Activated CD4-positive, alpha-beta memory T cell treated with anti-CD3 and anti-CD28 coated beads for 36 hours (primary cell): ENCODE measurements at regions of chr16 and their contacts with region 1.

Region 1: GRCh38 chr16:4475880-4476788 is at the start of gene HMOX2:
- DNase-seq: peak; percentile 97
- H3K4me3 Mint-ChIP-seq: peak within 1 kb of the TSS; percentile 89
- H3K27ac Mint-ChIP-seq: peak within 1 kb of the TSS; percentile 87
- H3K4me1 Mint-ChIP-seq: peaks cover 38% of the 10 kb centered on the region
- H3K27me3 Mint-ChIP-seq: no peaks in the 10 kb centered on the region
- total RNA-seq, gene HMOX2: 69.1 to 76.0 TPM

Region 2: GRCh38 chr16:4416200-4417032 is 59.7 kb before region 1 on chr16 and contains the start of gene CORO7:
- CTCF ChIA-PET with region 1: no interaction called
- POLR2A ChIA-PET with region 1: interaction called, 15 read pairs
- intact Hi-C with region 1: loop called (anchors 2 kb)
- DNase-seq: peak; percentile 98
- H3K4me3 Mint-ChIP-seq: peak within 1 kb of the TSS; percentile 88
- H3K27ac Mint-ChIP-seq: peak within 1 kb of the TSS; percentile 88
- H3K4me1 Mint-ChIP-seq: peaks cover 33% of the 10 kb centered on the region
- H3K27me3 Mint-ChIP-seq: no peaks in the 10 kb centered on the region
- total RNA-seq, gene CORO7: 90.4 to 101 TPM

Region 3: DNA sequence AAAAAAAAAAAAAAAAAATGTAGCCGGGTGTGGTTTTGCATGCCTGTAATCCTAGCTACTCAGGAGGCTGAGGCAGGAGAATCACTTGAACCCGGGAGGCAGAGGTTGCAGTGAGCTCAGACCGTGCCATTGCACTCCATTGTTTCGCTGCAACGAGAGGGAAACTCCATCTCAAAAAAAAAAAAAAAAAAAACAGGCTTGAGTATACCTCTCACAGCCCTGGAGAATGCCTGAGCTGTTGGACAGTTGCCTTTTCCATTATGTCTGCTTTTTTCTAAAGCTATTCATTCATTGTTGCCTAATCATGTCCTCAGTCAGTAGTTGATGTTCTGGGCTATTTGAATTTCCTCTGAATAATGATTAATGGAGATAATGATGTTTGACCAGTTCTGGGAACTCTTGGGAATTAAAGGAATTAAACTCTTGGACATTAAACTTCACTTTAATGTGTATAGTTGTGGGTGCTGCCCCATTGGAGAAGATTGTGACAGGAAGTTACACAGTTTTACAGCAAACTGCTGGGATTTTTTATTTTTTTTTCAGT is 11.9 kb after region 1 on chr16:
- CTCF ChIA-PET with region 1: interaction called, 10 read pairs
- POLR2A ChIA-PET with region 1: interaction called, 5 read pairs
- intact Hi-C with region 1: no loop called
- DNase-seq: no peak
- H3K4me3 Mint-ChIP-seq: no peak overlapping the region
- H3K27ac Mint-ChIP-seq: peak overlapping the region; percentile 94
- H3K4me1 Mint-ChIP-seq: peaks cover 54% of the 10 kb centered on the region
- H3K27me3 Mint-ChIP-seq: no peaks in the 10 kb centered on the region

Region 4: GRCh38 chr16:4538350-4539235 is 62.5 kb after region 1 on chr16 and contains the start of gene CDIP1:
- CTCF ChIA-PET with region 1: no interaction called
- POLR2A ChIA-PET with region 1: interaction called, 4 read pairs
- intact Hi-C with region 1: loop called (anchors 1 kb)
- DNase-seq: peak; percentile 99
- H3K4me3 Mint-ChIP-seq: peak within 1 kb of the TSS; percentile 72
- H3K27ac Mint-ChIP-seq: peak within 1 kb of the TSS; percentile 12
- H3K4me1 Mint-ChIP-seq: peaks cover 33% of the 10 kb centered on the region
- H3K27me3 Mint-ChIP-seq: no peaks in the 10 kb centered on the region
- total RNA-seq, gene CDIP1: 25.7 to 27.5 TPM

Region 5: DNA sequence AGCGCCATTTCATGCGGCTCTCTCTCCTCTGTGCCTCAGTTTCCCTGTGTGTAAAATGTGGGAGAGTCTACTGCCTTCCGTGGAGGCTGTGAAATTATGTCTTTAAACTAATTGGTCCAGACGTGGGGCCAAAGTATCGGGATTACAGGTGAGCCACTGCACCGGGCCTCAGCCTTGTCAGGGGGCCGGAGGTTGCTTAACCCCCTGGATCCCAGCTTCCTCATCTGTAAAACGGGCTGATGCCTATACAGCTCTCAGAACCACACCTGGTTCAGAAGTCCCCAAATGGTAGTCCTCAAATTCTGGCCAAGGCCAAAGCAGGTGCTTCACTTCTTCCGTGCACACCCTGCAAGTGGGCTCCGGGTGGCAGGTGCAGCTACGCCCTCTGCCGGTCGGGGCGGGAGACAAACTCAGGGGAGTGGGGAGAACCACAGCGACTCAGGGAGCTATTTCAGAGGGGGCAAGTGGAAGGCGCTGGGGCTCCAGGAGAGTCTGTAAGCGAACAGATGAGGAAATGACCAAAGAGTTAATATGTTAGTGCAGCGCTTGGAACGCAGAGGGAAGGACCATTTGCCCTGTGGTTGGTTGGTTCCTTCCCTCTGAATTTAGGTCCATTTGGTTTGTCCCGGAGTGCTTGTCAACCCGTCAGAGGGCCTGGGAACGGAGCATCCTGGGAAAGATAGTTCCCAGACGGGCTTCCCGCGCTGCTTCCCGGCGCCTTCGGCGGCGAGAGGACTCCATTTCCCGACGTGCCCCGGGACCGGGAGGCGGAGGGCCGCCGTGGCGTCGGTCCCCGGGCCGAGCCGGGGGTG is 148.1 kb after region 1 on chr16 and contains the start of gene MGRN1:
- CTCF ChIA-PET with region 1: interaction called, 10 read pairs
- POLR2A ChIA-PET with region 1: no interaction called
- intact Hi-C with region 1: no loop called
- DNase-seq: peak; percentile 96
- H3K4me3 Mint-ChIP-seq: peak within 1 kb of the TSS; percentile 99
- H3K27ac Mint-ChIP-seq: peak within 1 kb of the TSS; percentile 98
- H3K4me1 Mint-ChIP-seq: peaks cover 28% of the 10 kb centered on the region
- H3K27me3 Mint-ChIP-seq: no peaks in the 10 kb centered on the region
- total RNA-seq, gene MGRN1: 72.7 to 73.2 TPM